PC-9 (cell line): ENCODE measurements at regions of chr6 and their contacts with region 1.

Region 1: DNA sequence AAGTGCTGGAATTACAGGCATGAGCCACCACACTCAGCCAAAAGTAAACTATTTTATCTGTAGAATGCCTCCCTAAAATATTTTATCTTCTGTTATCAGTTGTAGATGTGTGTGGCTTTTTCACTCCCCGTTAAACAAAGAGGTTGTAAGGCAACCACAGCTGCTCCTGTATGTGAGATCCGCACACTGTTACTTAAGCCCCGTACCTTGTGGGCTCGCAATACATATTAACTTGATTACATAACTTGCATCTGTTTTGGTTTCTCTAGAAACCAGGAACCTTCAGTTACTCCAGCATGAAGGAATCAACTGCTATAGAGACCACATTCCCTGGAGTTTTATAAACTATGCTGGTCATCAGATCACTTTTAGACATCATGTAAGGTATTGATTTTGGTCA is 420.1 kb upstream of the SLC35B3 start:
- DNase-seq: no peak
- H3K4me3 ChIP-seq: no peak overlapping the region
- H3K27ac ChIP-seq: no peak overlapping the region
- H3K4me1 ChIP-seq: no peaks in the 10 kb centered on the region
- H3K27me3 ChIP-seq: no peaks in the 10 kb centered on the region
- CTCF ChIP-seq: no peak

Region 2: GRCh38 chr6:8758412-8758811 is 97.0 kb before region 1 on chr6:
- CTCF ChIA-PET with region 1: interaction called, 22 read pairs
- POLR2A ChIA-PET with region 1: no interaction called
- intact Hi-C with region 1: no loop called
- DNase-seq: no peak
- H3K4me3 ChIP-seq: no peak overlapping the region
- H3K27ac ChIP-seq: no peak overlapping the region
- H3K4me1 ChIP-seq: no peaks in the 10 kb centered on the region
- H3K27me3 ChIP-seq: no peaks in the 10 kb centered on the region
- CTCF ChIP-seq: no peak

Region 3: DNA sequence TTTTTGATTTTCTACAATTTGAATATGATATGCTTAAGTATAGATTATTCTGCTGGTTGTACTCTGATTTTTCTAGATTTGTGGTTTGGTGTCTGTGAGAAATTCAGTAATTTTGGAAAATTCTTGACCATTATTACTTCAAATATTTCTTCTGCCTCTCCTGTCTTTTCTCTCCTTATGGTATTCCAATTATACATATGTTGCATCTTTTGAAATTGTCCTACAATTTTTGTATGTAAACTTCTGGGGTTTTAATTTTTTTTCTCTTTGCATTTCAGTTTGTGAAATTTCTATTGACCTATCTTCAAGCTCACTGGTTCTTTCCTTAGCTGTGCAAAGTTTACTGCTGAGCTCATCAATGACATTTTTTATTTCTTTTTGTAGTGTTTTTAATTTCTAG is 114.3 kb after region 1 on chr6:
- CTCF ChIA-PET with region 1: no interaction called
- POLR2A ChIA-PET with region 1: no interaction called
- intact Hi-C with region 1: no loop called
- DNase-seq: no peak
- H3K4me3 ChIP-seq: no peak overlapping the region
- H3K27ac ChIP-seq: no peak overlapping the region
- H3K4me1 ChIP-seq: no peaks in the 10 kb centered on the region
- H3K27me3 ChIP-seq: no peaks in the 10 kb centered on the region
- CTCF ChIP-seq: no peak